Activated T-helper 2 cell treated with anti-CD3 and anti-CD28 coated beads, Interferon-gamma antibody, Interleukin-2, Interleukin-4, amounts not matched to agents 10 μg/mL and 5 μg/mL and 100 μg/mL, durations not matched to agents 14 hours and 24 hours and 36 hours (primary cell): ENCODE measurements at regions of chr15 and their contacts with region 1.

Region 1: GRCh38 chr15:78241007-78241406 is 6.6 kb upstream of the ACSBG1 start:
- DNase-seq: peak; percentile 70
- H3K4me3 Mint-ChIP-seq: no peak overlapping the region
- H3K27ac Mint-ChIP-seq: no peak overlapping the region
- H3K4me1 Mint-ChIP-seq: peaks cover 3% of the 10 kb centered on the region
- H3K27me3 Mint-ChIP-seq: peaks cover 6% of the 10 kb centered on the region

Region 2: GRCh38 chr15:77959432-77959879 is 281.6 kb before region 1 on chr15:
- intact Hi-C with region 1: loop called (anchors 5 kb)
- DNase-seq: peak; percentile 67
- H3K4me3 Mint-ChIP-seq: no peak overlapping the region
- H3K27ac Mint-ChIP-seq: no peak overlapping the region
- H3K4me1 Mint-ChIP-seq: peaks cover 16% of the 10 kb centered on the region
- H3K27me3 Mint-ChIP-seq: peaks cover 44% of the 10 kb centered on the region

Region 3: DNA sequence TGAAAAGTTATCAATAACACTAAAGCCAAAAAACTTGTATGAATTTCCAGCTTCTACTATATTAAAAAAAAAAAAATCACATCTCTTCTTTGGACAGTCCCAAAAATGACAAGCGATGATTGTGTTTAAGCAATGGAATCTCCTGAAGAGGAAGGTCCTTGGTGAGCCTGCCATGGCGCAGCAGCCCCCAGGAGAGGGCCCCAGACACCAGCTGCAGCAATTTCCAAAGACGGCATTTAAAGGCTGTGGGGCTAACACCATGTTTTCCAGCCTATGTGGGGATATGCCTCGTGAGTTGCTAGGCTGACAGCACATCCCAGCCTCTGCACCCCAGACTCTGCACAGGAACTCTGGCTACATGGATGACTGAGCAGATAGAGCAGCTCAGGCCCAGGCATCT is 43.8 kb after region 1 on chr15:
- intact Hi-C with region 1: no loop called
- DNase-seq: no peak
- H3K4me3 Mint-ChIP-seq: no peak overlapping the region
- H3K27ac Mint-ChIP-seq: no peak overlapping the region
- H3K4me1 Mint-ChIP-seq: no peaks in the 10 kb centered on the region
- H3K27me3 Mint-ChIP-seq: no peaks in the 10 kb centered on the region